Activated CD8-positive, alpha-beta T cell treated with anti-CD3 and anti-CD28 coated beads for 36 hours (primary cell): ENCODE measurements at regions of chr16 and their contacts with region 1.

Region 1: DNA sequence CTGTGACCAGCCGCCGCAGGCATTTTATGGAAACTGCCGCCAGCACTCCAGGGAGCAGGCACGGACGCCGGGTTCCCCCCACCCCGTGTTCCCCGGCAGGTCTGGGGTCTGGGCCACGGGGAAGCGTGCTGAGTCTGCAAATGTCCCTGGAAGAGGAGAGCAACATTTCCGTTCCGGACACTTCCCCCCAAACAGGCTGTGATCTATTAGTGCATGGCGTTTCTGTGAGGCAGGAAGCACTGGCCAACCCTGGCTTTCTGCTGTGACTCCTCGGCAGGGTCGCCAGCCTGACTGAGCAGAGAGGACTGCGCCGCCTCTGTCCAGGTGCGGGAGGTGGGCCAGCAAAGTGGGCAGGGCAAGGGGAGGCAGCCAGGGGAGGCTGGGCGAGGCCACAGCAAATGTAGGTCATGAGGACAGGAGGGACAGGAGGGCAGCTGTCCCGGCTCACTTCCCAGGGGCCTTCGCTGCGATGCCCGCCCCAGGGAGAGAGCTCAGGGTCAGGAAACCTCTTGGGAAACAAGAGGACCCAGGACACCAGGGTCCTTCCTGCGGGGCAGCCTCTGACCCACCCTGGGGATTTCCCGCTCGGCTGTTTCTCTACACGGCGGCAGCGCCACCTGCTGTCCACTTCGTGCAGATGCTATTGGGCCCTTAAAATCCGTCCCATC is 9.5 kb downstream of the FOXF1 start:
- DNase-seq: peak; percentile 59
- ATAC-seq: peak; percentile 47
- H3K4me3 Mint-ChIP-seq: no peak overlapping the region
- H3K27ac Mint-ChIP-seq: no peak overlapping the region
- H3K4me1 Mint-ChIP-seq: no peaks in the 10 kb centered on the region
- H3K27me3 Mint-ChIP-seq: peaks cover 54% of the 10 kb centered on the region
- CTCF ChIP-seq: peak; percentile 97

Region 2: DNA sequence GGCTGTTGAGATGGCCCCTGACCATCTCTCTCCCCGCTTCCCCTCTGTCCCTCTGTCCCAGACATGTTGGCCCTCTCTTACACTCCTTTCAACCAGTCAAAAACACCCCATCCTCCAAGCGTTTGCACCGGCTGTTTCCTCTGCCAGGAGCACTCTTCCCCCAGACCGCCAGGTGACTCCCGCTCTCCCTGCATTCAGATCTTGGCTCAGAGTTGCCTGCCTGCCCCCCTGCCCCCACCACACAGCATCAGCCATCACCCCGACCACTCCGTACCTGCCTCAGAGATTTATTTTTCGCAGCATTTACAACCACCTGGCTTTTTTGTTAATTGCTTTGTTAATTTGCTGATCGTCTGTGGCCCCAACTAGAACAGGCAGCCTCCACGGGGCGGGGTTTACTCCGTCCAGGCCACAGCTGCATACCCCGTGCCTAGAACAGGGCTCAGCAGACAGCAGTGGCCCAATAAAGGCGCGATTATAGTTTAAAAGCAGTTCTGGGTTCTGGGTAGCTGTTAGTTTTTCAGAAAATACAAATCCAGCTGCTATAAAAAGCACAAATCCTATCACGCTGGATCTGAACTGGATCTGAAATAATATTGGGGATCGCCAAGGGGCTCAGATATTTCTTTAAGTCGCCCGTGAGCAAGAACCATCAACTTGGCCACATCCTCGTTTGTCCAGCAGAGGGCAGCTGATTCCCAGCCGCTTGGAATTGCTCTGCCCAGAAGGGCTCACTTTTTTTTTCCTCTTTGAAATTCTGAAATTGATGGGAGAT is 447.3 kb before region 1 on chr16:
- CTCF ChIA-PET with region 1: interaction called, 20 read pairs
- POLR2A ChIA-PET with region 1: no interaction called
- intact Hi-C with region 1: loop called (anchors 2 kb)
- DNase-seq: peak; percentile 67
- ATAC-seq: no peak
- H3K4me3 Mint-ChIP-seq: no peak overlapping the region
- H3K27ac Mint-ChIP-seq: no peak overlapping the region
- H3K4me1 Mint-ChIP-seq: no peaks in the 10 kb centered on the region
- H3K27me3 Mint-ChIP-seq: peaks cover 22% of the 10 kb centered on the region
- CTCF ChIP-seq: peak; percentile 81

Region 3: DNA sequence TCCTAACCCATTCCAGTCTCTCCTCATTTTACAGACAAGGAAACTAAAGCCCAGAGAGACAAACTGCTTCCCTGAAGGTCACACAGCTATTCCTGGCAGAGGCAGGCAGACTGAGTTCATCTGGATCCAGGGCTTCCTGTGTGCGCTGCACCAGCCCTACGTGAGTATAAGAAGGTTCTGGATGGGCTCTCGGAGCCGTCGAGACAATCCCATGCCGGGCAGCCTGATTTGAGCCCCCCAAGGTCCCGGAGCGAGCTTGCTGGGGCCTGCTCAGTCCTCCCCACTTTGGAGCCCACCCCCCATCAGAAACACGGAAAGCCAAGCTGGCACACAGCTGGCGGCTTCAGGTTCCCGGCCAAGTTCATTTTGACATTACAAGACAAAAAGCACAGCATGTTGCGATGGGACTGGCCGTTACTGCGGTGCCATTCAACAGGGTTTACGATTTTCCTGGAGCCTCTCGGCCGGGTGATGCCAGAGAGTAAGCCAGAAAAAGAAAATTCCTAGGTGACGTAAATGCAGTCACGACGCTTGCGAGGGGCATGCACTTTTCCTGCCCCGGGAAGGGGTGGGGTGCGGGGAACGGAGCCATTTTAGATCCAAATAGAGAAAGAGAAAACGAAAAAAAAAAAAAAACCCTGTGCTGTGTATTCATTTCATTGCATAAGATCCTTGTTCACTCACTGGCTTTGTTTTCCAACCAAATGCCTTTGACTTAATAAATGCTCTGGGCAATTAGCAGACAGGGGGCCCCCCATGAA is 176.6 kb before region 1 on chr16:
- CTCF ChIA-PET with region 1: interaction called, 19 read pairs
- POLR2A ChIA-PET with region 1: no interaction called
- intact Hi-C with region 1: loop called (anchors 5 kb)
- DNase-seq: no peak
- ATAC-seq: no peak
- H3K4me3 Mint-ChIP-seq: no peak overlapping the region
- H3K27ac Mint-ChIP-seq: no peak overlapping the region
- H3K4me1 Mint-ChIP-seq: no peaks in the 10 kb centered on the region
- H3K27me3 Mint-ChIP-seq: peaks cover 37% of the 10 kb centered on the region
- CTCF ChIP-seq: no peak